ENCODE measurements at regions of chr1 and their contacts with region 1.

Region 1: GRCh38 chr1:204806943-204807687 is 63.5 kb upstream of the NFASC start:
- DNase-seq: peak; percentile 74 to 93 (median 85)
- ATAC-seq: peak; percentile 97
- H3K4me3 ChIP-seq: peak overlapping the region; percentile 76
- H3K4me3 Mint-ChIP-seq: peak overlapping the region; percentile 40 to 97 (median 88)
- H3K27ac ChIP-seq: no peak overlapping the region
- H3K27ac Mint-ChIP-seq: peak overlapping the region; percentile 40 to 81 (median 63)
- H3K4me1 ChIP-seq: no peaks in the 10 kb centered on the region
- H3K4me1 Mint-ChIP-seq: peaks cover 0 to 22% (median 15%) of the 10 kb centered on the region in 7 donors
- H3K27me3 ChIP-seq: no peaks in the 10 kb centered on the region
- H3K27me3 Mint-ChIP-seq: peaks cover 0 to 28% (median 0%) of the 10 kb centered on the region in 5 donors

Region 2: DNA sequence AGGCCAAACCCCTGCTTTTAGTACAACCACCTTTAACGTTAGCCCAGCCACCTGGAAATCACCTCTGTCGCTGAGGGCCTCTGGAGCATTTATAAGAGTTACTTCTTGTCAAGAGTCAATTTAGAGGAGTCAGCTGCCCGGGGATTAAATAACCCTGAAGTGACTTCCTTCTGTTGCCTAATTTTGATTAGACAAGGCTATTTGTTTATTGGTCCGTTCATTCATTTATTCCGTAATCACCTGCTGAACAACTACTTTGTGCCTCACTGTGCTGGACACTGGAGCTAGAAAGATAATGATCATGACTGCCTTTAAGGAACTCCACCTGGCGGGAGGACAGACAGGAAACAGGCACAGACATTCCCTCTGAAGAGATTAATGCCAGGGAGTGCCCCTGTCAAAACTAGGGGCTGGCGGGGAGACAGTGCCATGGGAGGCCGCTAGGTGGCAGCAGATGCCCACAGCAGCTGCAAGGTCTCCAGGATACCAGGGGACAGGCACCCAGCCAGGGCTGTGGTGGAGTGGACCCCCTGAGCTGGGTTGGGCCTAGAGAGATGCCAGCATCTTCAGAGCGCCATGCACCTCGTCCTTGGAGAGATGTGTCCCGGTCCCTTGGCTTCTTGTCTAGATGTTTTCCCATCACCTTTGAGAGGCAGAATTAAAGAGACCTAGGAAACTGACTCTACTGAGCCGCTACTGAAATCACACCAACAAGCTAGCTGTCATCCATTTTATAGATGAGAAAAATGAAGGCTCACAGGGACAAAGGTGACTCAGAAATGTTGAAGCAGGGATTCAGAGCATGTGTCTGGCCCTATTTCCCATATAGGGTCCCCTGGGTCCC is 644.7 kb before region 1 on chr1:
- CTCF ChIA-PET with region 1: no interaction called
- POLR2A ChIA-PET with region 1: no interaction called
- intact Hi-C with region 1: loop called in 1 of 2 experiments (anchors 1 kb)
- DNase-seq: peak; percentile 60 to 81 (median 71)
- ATAC-seq: peak; percentile 90
- H3K4me3 ChIP-seq: no peak overlapping the region
- H3K4me3 Mint-ChIP-seq: no peak overlapping the region
- H3K27ac ChIP-seq: no peak overlapping the region
- H3K27ac Mint-ChIP-seq: no peak overlapping the region
- H3K4me1 ChIP-seq: no peaks in the 10 kb centered on the region
- H3K4me1 Mint-ChIP-seq: no peaks in the 10 kb centered on the region
- H3K27me3 ChIP-seq: no peaks in the 10 kb centered on the region
- H3K27me3 Mint-ChIP-seq: peaks cover 5 to 18% (median 9%) of the 10 kb centered on the region in 5 donors

Region 3: GRCh38 chr1:204446370-204447111 is 360.6 kb before region 1 on chr1:
- CTCF ChIA-PET with region 1: interaction called, 8 read pairs
- POLR2A ChIA-PET with region 1: no interaction called
- intact Hi-C with region 1: loop called in 1 of 2 experiments (anchors 1 kb)
- DNase-seq: peak; percentile 61 to 83 (median 75)
- ATAC-seq: peak; percentile 97
- H3K4me3 ChIP-seq: no peak overlapping the region
- H3K4me3 Mint-ChIP-seq: no peak overlapping the region
- H3K27ac ChIP-seq: peak overlapping the region; percentile 4
- H3K27ac Mint-ChIP-seq: peak overlapping the region; percentile 54 to 92 (median 73)
- H3K4me1 ChIP-seq: peaks cover 0 to 8% of the 10 kb centered on the region in 2 donors
- H3K4me1 Mint-ChIP-seq: peaks cover 3 to 32% (median 10%) of the 10 kb centered on the region in 7 donors
- H3K27me3 ChIP-seq: no peaks in the 10 kb centered on the region
- H3K27me3 Mint-ChIP-seq: no peaks in the 10 kb centered on the region

Region 4: GRCh38 chr1:204583906-204584632 is 223.0 kb before region 1 on chr1:
- CTCF ChIA-PET with region 1: interaction called, 10 read pairs
- POLR2A ChIA-PET with region 1: no interaction called
- intact Hi-C with region 1: no loop called
- DNase-seq: no peak
- ATAC-seq: no peak
- H3K4me3 ChIP-seq: no peak overlapping the region
- H3K4me3 Mint-ChIP-seq: peak overlapping the region in 2 of 10 donors; percentile 12 to 25
- H3K27ac ChIP-seq: no peak overlapping the region
- H3K27ac Mint-ChIP-seq: peak overlapping the region in 5 of 9 donors; percentile 39 to 59 (median 43)
- H3K4me1 ChIP-seq: peaks cover 5 to 17% of the 10 kb centered on the region in 2 donors
- H3K4me1 Mint-ChIP-seq: peaks cover 14 to 35% (median 28%) of the 10 kb centered on the region in 7 donors
- H3K27me3 ChIP-seq: no peaks in the 10 kb centered on the region
- H3K27me3 Mint-ChIP-seq: no peaks in the 10 kb centered on the region

Region 5: DNA sequence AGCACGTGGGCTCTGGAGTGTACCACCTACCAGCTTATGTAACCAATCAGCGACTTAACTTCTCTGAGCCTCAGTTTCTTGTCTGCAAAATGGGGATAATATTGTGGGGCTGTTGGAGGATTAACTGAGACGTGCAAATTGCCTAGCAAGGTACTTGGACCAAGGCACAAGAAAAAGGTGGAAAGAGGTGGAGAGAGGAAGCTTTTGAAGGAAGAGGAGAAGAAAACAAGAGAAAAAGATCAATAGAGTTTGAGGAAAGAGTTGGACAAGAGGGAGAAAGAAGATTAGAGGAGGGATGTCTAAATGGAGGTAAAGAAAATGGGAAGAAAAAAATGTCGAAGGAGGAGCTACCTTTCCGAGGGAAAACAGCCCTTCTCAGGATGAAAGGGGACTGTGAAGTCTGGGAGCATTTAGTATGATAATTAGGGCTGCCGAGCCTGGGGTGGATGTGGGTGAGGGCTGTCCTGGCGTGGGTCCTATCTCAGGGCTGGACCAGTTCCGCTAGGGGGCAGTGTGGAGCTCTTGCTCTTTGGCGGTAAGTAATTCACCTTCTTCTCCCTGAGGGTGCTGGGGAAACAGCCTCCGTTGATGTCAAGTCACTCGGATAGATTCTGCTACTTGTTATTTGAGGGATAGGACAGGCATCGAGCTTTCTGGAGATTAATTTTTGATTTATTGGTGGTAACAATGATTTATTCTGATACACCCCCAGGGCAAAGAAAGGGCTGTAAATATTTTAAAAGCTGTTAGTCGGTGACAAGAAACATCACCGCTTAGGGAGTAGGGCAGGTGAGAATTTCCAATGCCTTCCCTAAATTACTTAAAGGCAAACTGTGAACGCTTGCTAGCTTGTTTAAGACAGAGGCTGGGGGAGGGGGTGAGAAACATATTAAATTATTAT is 15.4 kb before region 1 on chr1:
- CTCF ChIA-PET with region 1: interaction called, 44 read pairs
- POLR2A ChIA-PET with region 1: interaction called, 3 read pairs
- intact Hi-C with region 1: loop called (anchors 1 kb)
- DNase-seq: peak; percentile 57 to 80 (median 73)
- ATAC-seq: peak; percentile 96
- H3K4me3 ChIP-seq: no peak overlapping the region
- H3K4me3 Mint-ChIP-seq: no peak overlapping the region
- H3K27ac ChIP-seq: no peak overlapping the region
- H3K27ac Mint-ChIP-seq: peak overlapping the region in 1 of 9 donors; percentile 24
- H3K4me1 ChIP-seq: no peaks in the 10 kb centered on the region
- H3K4me1 Mint-ChIP-seq: peaks cover 0 to 8% (median 2%) of the 10 kb centered on the region in 7 donors
- H3K27me3 ChIP-seq: peaks cover 0 to 2% of the 10 kb centered on the region in 2 donors
- H3K27me3 Mint-ChIP-seq: peaks cover 27 to 36% (median 30%) of the 10 kb centered on the region in 5 donors